Cardiac septum (tissue), 1 donor: ENCODE measurements at regions of chr5 and their contacts with region 1.

Region 1: DNA sequence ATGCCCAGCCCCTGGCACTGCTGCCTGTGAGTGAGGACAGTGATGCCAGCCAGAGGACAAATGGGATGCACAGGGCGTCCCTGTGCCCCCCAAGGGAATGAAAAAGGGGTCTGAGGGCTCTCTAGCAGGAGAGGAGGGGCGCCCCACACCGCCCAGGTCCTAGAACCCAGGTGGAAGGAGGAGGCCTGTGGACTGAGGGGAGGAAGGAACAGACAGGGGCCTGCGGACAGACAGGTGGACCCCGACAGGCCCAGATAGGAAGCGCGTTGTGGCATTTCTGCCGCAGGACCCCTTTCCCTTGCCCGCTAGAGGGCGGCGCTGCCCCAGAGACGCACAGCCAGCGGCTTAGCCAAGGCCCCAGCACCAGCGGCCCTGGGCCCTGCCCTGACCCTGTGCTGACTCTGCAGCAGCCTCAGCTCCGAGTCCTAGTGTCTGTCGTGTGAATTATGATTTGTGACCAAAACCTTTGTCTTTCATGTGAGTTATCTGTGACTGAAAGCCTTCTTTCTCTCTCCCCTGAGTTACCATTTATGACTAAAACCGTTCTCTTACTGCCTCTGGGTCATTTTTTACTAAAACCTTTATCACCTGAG is 30.7 kb downstream of the TRIP13 start:
- DNase-seq: no peak

Region 2: DNA sequence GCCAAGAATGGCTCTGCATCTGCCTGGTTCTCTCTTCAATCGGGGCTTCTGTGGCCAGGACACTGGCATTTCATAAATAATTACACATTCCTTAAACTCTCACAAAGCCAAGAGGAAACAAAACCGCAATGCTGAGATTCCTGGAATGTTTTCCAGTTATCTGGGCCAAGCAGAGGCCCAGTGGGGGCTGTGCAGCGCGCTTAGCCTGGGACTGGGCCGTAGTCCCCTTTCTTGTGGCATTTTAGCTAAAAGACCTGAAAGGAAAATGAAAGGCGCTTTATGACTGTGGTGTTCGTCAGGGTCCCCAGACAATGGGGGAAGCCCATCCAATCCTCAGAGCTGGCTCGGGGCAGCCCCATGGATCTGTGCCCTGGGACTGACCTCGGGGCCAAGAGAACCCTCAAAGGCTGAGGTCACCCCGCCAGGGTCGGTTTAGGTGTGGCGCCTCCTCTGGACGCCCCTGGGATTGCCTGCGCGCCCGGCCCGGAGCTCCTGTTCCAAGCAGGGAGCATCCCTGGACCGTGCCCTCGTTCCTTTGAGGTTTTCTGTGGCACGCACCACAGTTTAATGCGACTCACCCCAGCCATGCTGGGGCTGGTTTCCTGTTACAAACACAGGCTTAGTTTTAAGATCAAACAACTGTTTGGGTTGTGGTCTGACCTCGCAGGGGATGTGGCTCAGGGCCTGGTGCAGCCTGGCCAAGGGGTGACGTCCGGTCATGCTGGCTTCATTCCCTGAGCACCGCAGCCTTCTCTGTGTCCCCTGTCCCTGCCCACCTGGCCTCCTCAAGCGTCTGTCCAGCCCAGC is 33.8 kb after region 1 on chr5:
- intact Hi-C with region 1: no loop called
- DNase-seq: peak; percentile 74

Region 3: DNA sequence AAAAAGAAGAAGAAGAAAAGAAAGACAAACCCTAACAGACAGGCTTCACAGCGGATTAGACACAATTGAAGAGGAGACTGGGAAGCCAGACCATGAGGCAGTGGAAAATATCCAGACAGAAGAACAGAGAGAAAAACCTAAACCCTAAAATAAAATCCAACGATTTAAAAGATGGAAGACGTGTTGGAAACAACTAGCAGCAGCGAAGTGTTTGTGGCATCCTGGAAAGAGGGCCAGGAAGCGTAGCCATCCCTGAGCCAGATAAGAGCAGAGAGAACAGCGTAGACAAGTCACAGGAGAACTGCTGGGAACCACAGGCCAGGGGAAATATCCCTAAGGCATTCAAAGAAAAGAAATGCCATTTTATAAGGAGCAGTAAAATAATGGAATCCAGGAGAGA is 45.5 kb after region 1 on chr5:
- intact Hi-C with region 1: no loop called
- DNase-seq: peak; percentile 43

Region 4: GRCh38 chr5:1011226-1011631 is 87.9 kb after region 1 on chr5:
- intact Hi-C with region 1: loop called (anchors 10 kb)
- DNase-seq: peak; percentile 66

Region 5: DNA sequence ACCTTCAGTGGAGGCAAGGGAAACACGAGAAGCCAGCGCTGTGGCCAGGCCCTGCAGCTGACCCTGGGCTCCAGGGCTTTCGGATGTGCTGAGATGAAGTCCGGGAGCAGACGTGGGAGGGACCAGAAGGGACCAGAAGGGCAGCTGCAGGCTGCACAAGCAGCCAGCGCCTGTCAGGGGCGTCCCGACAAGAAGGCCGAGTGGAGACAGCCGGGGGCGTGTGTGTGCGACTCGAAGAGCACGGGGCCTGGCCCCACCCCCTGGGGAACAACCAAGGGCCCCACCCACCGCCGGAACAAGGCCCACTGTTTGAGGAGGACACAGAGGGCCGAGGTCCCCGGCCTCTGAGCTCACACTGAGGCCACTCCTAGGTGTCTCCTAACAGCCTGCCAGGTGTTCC is 157.1 kb after region 1 on chr5:
- intact Hi-C with region 1: no loop called
- DNase-seq: no peak

Region 6: GRCh38 chr5:1140171-1140817 is 216.9 kb after region 1 on chr5:
- intact Hi-C with region 1: loop called (anchors 2 kb)
- DNase-seq: peak; percentile 86

Region 7: DNA sequence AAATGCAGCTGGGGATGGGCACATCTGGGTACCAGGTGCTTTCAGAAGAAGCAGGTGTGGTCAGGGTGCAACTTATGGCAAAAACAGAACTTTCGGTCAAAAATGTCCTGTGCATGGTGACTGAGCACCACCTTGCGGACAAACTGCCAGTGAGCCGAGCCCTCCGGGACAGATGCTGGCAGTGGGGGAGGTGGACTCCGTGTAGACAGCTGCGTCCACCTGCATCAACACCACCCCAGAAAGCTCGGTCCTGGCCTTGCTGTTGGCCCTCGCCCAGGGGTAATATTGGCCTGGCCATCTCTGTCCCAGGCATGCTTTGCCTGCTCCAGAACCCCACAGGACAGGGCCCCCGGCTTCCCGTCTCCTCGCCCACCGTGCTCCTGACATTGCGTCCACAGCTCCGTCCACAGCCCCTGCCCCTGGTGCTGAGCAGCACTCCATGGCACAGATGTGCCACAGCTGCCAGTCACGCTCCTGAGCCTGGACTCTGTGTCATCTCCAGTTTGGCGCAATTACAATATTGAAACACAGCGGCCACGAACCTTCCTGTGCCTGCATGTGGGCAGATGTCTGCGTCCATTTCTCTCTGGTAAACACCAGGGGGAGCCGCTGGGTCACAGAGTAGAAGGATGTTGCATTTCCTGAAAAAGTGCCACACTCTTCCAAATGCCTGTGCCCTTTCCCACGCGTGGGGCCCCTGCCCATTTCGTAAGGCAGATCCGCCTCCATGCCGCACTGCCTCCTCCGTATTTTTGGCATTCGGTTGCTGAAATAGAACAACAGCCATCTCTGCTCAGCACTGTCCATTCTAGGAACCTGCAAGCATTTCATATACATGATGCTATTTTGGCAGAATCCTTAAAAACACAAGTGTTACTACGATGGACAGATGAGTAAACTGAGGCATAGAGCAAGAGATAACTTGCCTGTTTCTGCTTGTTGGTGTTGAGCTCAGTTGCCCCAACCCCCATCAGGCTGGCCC is 244.6 kb after region 1 on chr5:
- intact Hi-C with region 1: loop called (anchors 2 kb)
- DNase-seq: no peak

Region 8: DNA sequence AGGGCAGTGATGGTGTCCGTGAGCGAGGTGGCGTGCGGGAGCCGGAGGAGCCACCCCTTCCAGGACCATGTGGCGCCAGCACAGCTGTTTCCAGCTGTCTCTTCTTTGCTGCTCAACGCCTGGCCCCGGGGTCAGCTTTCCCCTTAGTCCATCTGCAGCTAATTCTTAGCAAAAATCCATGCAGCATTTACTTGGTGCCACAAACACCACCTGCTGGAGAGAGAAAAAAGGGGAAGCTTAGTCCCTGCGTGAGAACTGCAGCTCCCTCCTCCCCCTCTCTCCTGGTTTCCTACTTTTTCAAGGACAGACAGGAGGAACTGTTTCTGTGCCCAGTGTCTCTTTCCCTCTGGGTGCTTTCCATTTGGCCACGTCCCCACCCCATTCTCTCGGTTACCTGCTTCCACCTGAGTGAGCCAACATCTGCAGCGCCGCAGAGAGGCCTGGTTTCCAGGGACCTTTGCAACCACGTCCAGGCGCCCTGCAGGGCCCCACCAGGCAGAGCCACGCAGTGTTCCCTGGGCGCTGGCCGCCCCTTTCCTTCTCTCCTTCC is 281.4 kb after region 1 on chr5:
- intact Hi-C with region 1: no loop called
- DNase-seq: no peak

Region 9: GRCh38 chr5:1641560-1642166 is 718.3 kb after region 1 on chr5:
- intact Hi-C with region 1: loop called (anchors 5 kb)
- DNase-seq: peak; percentile 78